Right ventricle myocardium inferior (tissue), 1 donor: ENCODE measurements at regions of chr1 and their contacts with region 1.

Region 1: GRCh38 chr1:182848736-182849135 is 9.6 kb downstream of the DHX9 start:
- DNase-seq: no peak
- ATAC-seq: no peak

Region 2: GRCh38 chr1:182861994-182862393 is 13.3 kb after region 1 on chr1:
- intact Hi-C with region 1: loop called (anchors 1 kb)
- DNase-seq: no peak
- ATAC-seq: no peak

Region 3: GRCh38 chr1:182889997-182890396 is 41.3 kb after region 1 on chr1:
- intact Hi-C with region 1: loop called (anchors 1 kb)
- DNase-seq: no peak
- ATAC-seq: no peak

Region 4: GRCh38 chr1:182984621-182985020 is 135.9 kb after region 1 on chr1:
- intact Hi-C with region 1: no loop called
- DNase-seq: no peak
- ATAC-seq: no peak